SK-N-SH (cell line): ENCODE measurements at regions of chr16 and their contacts with region 1.

Region 1: GRCh38 chr16:49350265-49351095 is 23.1 kb upstream of the C16orf78 start:
- DNase-seq: peak; percentile 81
- H3K4me3 ChIP-seq: no peak overlapping the region
- H3K27ac ChIP-seq: no peak overlapping the region
- H3K4me1 ChIP-seq: no peaks in the 10 kb centered on the region
- H3K27me3 ChIP-seq: no peaks in the 10 kb centered on the region
- CTCF ChIP-seq: peak; percentile 85
- EP300 ChIP-seq: no peak
- RAD21 ChIP-seq: peak; percentile 90

Region 2: GRCh38 chr16:48687421-48688038 is 663.0 kb before region 1 on chr16:
- CTCF ChIA-PET with region 1: interaction called, 71 read pairs
- POLR2A ChIA-PET with region 1: no interaction called
- DNase-seq: peak; percentile 68
- H3K4me3 ChIP-seq: no peak overlapping the region; a peak in 1 of 4 replicates
- H3K27ac ChIP-seq: no peak overlapping the region
- H3K4me1 ChIP-seq: no peaks in the 10 kb centered on the region
- H3K27me3 ChIP-seq: no peaks in the 10 kb centered on the region; the same call in 1 of the 2 replicates
- CTCF ChIP-seq: peak; percentile 78
- EP300 ChIP-seq: no peak
- RAD21 ChIP-seq: peak; percentile 88

Region 3: GRCh38 chr16:49337814-49338350 is 12.6 kb before region 1 on chr16:
- CTCF ChIA-PET with region 1: interaction called, 67 read pairs
- POLR2A ChIA-PET with region 1: no interaction called
- DNase-seq: no peak
- H3K4me3 ChIP-seq: no peak overlapping the region
- H3K27ac ChIP-seq: no peak overlapping the region
- H3K4me1 ChIP-seq: no peaks in the 10 kb centered on the region
- H3K27me3 ChIP-seq: no peaks in the 10 kb centered on the region
- CTCF ChIP-seq: no peak
- EP300 ChIP-seq: no peak
- RAD21 ChIP-seq: no peak

Region 4: DNA sequence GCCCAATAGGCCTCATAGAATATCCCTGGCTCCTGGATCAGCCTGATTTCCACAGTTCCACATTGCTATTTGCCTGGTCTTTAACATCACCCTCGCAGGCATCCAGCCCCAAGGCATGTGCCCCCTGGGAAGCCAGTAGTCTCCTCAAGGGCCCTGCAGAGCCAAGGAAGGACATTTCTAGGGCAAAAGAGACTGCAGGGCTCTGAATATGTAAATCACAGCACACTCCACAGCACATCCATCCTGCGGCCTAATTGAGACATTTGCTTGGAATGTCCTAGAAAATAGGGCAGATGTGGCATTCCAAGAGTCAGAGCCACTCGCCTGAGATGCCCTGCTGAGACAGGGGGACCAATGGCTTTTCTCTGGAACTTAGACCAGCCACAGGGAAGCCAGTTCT is 11.8 kb after region 1 on chr16:
- CTCF ChIA-PET with region 1: interaction called, 15 read pairs
- POLR2A ChIA-PET with region 1: no interaction called
- DNase-seq: no peak
- H3K4me3 ChIP-seq: no peak overlapping the region
- H3K27ac ChIP-seq: no peak overlapping the region
- H3K4me1 ChIP-seq: no peaks in the 10 kb centered on the region
- H3K27me3 ChIP-seq: peaks cover 10% of the 10 kb centered on the region; the same call in 1 of the 2 replicates
- CTCF ChIP-seq: no peak
- EP300 ChIP-seq: no peak
- RAD21 ChIP-seq: no peak